ENCODE measurements at regions of chrX and their contacts with region 1.

Region 1: DNA sequence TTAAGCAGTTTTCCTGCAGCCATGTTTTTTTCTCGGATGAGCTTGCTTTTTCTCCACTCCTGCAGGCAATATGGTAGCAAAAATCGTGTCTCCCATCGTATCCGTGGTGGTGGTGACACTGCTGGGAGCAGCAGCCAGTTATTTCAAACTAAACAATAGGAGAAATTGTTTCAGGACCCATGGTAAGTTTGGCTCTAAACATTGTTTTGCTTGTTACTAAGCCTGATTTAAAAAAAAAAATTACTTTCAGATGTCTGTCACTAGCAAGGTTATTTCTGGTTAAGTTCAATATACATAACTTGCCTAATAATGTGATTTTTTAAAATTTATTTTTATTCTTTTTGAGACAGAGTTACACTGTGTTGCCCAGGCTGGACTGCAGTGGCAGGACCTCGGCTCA is 17.5 kb upstream of the GYG2 start:
- DNase-seq: no peak
- ATAC-seq: no peak

Region 2: GRCh38 chrX:2640275-2641150 is 170.8 kb before region 1 on chrX:
- intact Hi-C with region 1: loop called (anchors 5 kb)
- DNase-seq: no peak
- ATAC-seq: no peak

Region 3: GRCh38 chrX:2701600-2701999 is 109.7 kb before region 1 on chrX:
- intact Hi-C with region 1: loop called (anchors 5 kb)
- DNase-seq: no peak
- ATAC-seq: peak; percentile 49